ENCODE measurements at regions of chr14 and their contacts with region 1.

Region 1: DNA sequence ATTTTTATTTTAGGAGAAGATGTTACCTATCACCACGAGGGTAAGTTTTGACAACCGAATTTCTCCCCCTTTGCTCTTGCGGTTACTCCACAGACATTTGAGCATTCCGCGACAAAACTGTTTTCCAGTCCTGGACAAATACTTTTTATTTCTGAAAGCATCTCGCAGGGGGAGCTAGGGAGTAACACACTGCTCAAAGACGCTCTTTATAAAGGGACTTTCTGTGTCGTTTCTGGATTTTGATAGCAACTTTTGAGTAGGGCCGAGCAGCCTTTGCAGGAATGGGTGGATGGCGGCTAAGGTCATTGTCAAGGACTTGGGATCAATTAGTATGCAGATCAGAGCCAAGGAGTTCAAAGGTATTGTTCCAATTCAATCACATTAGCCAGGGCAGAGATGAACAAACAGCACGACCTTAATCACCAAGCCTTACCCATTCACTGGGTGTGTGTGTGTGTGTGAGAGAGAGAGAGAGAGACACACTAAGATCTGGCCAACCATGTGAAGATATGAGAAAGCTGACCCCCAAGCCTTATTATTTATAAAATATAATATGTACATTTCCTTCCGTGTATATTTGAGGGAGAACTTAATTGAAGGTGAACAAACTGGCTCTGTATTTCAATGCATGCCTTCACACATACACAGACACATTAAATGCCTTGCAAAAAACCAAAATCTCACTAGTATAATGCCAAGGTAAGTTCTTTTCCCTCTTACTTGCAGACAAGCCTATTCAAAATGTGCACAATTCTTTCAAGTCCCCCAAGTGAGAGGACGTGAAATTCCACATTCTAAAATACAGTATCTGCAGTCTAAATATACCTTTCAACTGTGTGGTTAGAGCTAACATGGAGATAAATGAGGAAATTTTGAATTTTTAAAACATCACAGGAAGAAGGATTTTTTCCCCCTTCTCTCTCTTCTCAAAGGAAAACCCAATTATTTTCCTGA is 613.8 kb downstream of the VRK1 start:
- DNase-seq: no peak
- H3K4me3 Mint-ChIP-seq: no peak overlapping the region
- H3K27ac Mint-ChIP-seq: no peak overlapping the region
- H3K4me1 Mint-ChIP-seq: peaks cover 29% of the 10 kb centered on the region
- H3K27me3 Mint-ChIP-seq: peaks cover 9% of the 10 kb centered on the region

Region 2: GRCh38 chr14:97380539-97380941 is 30.4 kb before region 1 on chr14:
- CTCF ChIA-PET with region 1: no interaction called
- intact Hi-C with region 1: loop called (anchors 1 kb)
- DNase-seq: peak; percentile 86
- H3K4me3 Mint-ChIP-seq: no peak overlapping the region
- H3K27ac Mint-ChIP-seq: peak overlapping the region; percentile 16
- H3K4me1 Mint-ChIP-seq: peaks cover 39% of the 10 kb centered on the region
- H3K27me3 Mint-ChIP-seq: no peaks in the 10 kb centered on the region

Region 3: DNA sequence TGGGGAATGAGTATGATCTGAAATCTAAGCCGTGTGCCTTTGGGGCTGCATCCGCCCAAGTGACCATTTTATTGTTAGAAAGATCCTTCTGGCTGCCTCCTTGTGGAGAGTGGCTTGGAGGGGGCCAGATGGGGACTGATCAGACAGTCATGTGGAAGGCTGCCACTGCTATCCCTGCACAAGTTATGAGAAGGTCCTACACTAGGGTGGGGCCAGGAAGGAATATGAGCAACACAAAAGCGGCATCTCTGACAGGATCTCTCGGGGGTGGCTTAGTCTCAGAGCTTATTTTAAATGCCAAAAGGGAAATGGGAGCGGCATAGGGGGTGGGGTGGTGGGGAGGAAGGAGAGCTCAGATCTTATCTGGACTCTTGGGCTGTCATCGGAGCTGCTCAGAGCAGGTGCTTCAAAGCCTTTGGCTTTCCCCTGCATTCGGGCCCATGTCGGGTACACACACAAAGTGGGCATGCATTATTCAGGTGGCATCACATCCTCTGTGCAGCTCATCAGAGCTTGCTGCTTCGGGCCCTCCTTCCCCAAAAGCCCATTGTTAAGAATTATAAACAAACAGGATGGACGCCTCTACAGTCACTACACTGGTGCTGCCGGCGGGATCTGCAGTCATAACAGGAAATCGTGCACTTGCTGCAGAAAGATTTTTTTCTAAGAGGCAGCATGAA is 191.6 kb after region 1 on chr14:
- CTCF ChIA-PET with region 1: no interaction called
- intact Hi-C with region 1: loop called (anchors 5 kb)
- DNase-seq: peak; percentile 80
- H3K4me3 Mint-ChIP-seq: no peak overlapping the region
- H3K27ac Mint-ChIP-seq: no peak overlapping the region
- H3K4me1 Mint-ChIP-seq: peaks cover 30% of the 10 kb centered on the region
- H3K27me3 Mint-ChIP-seq: no peaks in the 10 kb centered on the region

Measured in activated naive CD4-positive, alpha-beta T cell treated with anti-CD3 and anti-CD28 coated beads for 36 hours (primary cell).